ENCODE measurements at regions of chr2 and their contacts with region 1.

Region 1: DNA sequence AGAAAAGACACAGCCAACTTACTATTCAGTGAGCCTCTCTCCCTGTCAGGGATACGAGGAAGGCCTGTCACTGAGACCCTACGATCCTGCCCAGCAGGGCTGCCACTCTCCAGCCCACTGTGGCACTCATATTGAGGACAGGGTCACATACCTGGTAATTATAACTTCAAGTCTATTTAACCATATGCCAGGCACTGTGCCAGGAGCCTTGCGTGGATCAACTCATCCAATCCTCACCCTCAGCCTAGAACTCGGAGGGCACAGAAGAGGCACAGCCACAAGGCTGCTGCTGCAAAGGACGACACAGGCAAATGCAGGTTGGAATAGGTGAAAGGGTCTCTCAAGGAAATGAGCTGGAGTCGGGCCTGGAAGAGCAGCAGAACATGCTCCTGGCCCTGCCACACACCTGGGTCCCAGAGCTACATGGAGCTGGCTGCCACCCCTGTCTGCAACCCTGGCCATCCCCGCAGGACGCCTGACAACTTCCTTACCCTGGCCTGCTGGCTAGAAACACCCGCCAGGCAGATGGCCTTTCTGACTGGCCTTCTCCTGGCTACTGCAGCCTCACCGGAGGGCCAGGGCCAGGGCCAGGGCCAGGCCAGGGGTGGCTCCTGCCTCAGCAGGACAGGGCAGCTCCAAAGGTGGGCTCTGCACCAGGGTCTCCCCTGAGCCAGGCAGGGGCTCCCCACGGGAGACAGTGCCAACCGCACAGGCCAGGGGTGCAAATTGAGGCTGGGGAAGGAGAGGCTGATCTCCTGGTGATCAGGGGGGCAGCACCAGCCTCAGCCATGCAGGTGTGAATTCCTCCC is 32.1 kb upstream of the SLC66A3 start:
- DNase-seq: no peak
- H3K4me3 ChIP-seq: no peak overlapping the region
- H3K27ac ChIP-seq: no peak overlapping the region
- H3K4me1 ChIP-seq: peaks cover 0 to 16% (median 0%) of the 10 kb centered on the region in 3 donors
- H3K27me3 ChIP-seq: peaks cover 0 to 20% (median 0%) of the 10 kb centered on the region in 4 donors
- CTCF ChIP-seq: no peak
- POLR2A ChIP-seq: no peak

Region 2: GRCh38 chr2:10835052-10835970 is 287.9 kb before region 1 on chr2:
- intact Hi-C with region 1: loop called (anchors 2 kb)
- DNase-seq: no peak
- H3K4me3 ChIP-seq: no peak overlapping the region
- H3K27ac ChIP-seq: no peak overlapping the region
- H3K4me1 ChIP-seq: peaks cover 0 to 15% (median 0%) of the 10 kb centered on the region in 3 donors
- H3K27me3 ChIP-seq: peaks cover 0 to 79% (median 0%) of the 10 kb centered on the region in 4 donors
- CTCF ChIP-seq: peak; percentile 59 to 86 (median 79)
- POLR2A ChIP-seq: no peak

Region 3: GRCh38 chr2:11024259-11024645 is 99.0 kb before region 1 on chr2:
- intact Hi-C with region 1: no loop called
- DNase-seq: no peak
- H3K4me3 ChIP-seq: no peak overlapping the region
- H3K27ac ChIP-seq: no peak overlapping the region
- H3K4me1 ChIP-seq: peaks cover 0 to 7% (median 0%) of the 10 kb centered on the region in 3 donors
- H3K27me3 ChIP-seq: peaks cover 0 to 6% (median 0%) of the 10 kb centered on the region in 4 donors
- CTCF ChIP-seq: no peak
- POLR2A ChIP-seq: no peak

Measured in esophagus squamous epithelium (tissue), 5 donors.